HCT116 (cell line): ENCODE measurements at regions of chr2 and their contacts with region 1.

Region 1: GRCh38 chr2:191811807-191812602 is 34.9 kb downstream of the CAVIN2 start:
- DNase-seq: peak; percentile 53
- ATAC-seq: peak; percentile 94
- H3K4me3 ChIP-seq: no peak overlapping the region
- H3K27ac ChIP-seq: no peak overlapping the region
- H3K4me1 ChIP-seq: no peaks in the 10 kb centered on the region
- H3K27me3 ChIP-seq: no peaks in the 10 kb centered on the region
- CTCF ChIP-seq: peak; percentile 73 to 89 (median 87)
- POLR2A ChIP-seq: no peak
- RAD21 ChIP-seq: peak; percentile 97

Region 2: DNA sequence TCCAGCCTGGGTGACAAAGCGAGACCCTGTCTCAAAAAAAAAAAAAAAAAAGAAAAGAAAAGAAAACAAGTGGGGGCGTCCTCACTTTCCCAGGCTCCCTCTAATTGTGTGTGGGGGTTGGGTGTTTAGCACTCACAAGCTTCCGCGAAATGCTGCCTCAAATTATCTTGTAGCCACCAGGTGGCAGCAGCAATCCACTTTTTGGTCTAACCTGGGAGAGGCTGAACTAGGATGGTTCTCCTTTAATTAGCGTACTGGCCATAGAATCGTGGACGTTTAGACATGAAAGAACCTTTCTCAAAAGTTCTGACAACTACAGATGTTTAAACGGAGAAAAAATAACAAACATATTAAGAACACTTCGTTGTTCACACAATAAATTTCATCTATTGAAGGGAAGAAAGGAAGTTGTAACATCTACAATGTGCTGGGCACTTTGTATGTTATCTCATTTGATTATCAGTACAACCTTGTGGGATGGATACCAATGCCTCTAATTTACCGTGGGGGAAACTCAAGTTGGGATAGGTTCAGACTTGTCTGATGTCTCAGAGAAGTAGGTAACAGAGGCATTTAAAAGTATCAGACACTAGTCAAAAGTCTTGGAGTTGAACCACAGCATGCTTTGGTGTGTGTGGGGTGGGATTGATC is 256.8 kb before region 1 on chr2:
- CTCF ChIA-PET with region 1: interaction called, 8 read pairs
- POLR2A ChIA-PET with region 1: no interaction called
- RAD21 ChIA-PET with region 1: no interaction called
- intact Hi-C with region 1: loop called (anchors 5 kb)
- DNase-seq: peak; percentile 73
- ATAC-seq: peak; percentile 98
- H3K4me3 ChIP-seq: no peak overlapping the region
- H3K27ac ChIP-seq: no peak overlapping the region
- H3K4me1 ChIP-seq: peaks cover 0 to 5% of the 10 kb centered on the region in 2 experiments; a peak in 2 of 4 replicates
- H3K27me3 ChIP-seq: no peaks in the 10 kb centered on the region
- CTCF ChIP-seq: peak; percentile 56 to 80 (median 66); a peak in 5 of 6 replicates
- POLR2A ChIP-seq: no peak
- RAD21 ChIP-seq: peak; percentile 92

Region 3: DNA sequence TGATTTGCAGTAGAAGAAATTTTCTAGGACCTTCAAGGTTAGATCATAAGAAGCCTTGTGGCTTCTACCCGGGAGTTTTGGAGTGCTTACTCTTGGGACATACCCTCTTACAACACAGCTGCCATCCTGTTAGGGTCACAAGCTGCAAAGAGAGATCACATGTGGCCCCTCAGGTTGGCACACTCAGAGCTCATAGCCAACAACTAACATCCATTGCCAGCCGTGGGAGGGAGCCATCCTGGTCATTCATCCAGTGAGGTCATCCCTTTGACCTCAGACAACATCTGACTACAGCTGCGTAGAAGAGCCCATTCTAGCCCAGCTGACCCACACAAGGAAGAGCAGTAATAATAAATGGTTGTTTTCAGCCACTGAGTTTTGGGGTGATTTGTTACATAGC is 210.9 kb before region 1 on chr2:
- CTCF ChIA-PET with region 1: no interaction called
- POLR2A ChIA-PET with region 1: no interaction called
- RAD21 ChIA-PET with region 1: no interaction called
- intact Hi-C with region 1: no loop called
- DNase-seq: no peak
- ATAC-seq: no peak
- H3K4me3 ChIP-seq: no peak overlapping the region
- H3K27ac ChIP-seq: no peak overlapping the region
- H3K4me1 ChIP-seq: no peaks in the 10 kb centered on the region
- H3K27me3 ChIP-seq: no peaks in the 10 kb centered on the region
- CTCF ChIP-seq: no peak
- POLR2A ChIP-seq: no peak
- RAD21 ChIP-seq: no peak

Region 4: DNA sequence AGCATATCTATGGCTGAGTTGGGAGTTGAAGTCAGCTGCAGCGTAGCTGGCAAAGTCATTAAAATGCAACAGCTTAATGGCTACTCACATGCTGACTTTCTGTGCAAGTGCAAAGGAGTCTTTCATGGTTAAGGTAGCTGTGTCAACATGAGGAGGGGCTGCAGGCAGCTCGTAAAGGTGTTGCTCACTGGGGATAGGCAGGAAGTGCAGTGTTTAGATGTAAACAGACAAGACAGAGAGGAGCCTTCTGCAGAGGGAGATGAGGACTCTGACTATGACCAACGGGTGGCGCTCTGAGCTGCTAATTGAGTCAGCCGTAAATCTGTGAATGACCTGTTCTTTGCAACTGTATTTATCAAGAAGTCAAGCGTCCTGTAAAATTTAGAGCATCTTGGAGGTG is 57.2 kb after region 1 on chr2:
- CTCF ChIA-PET with region 1: interaction called, 39 read pairs
- POLR2A ChIA-PET with region 1: no interaction called
- RAD21 ChIA-PET with region 1: interaction called, 4 to 8 read pairs
- intact Hi-C with region 1: no loop called
- DNase-seq: peak; percentile 57
- ATAC-seq: peak; percentile 67
- H3K4me3 ChIP-seq: no peak overlapping the region
- H3K27ac ChIP-seq: no peak overlapping the region
- H3K4me1 ChIP-seq: peaks cover 36 to 45% of the 10 kb centered on the region in 2 experiments
- H3K27me3 ChIP-seq: no peaks in the 10 kb centered on the region
- CTCF ChIP-seq: peak; percentile 64 to 75 (median 66)
- POLR2A ChIP-seq: no peak
- RAD21 ChIP-seq: peak; percentile 79

Region 5: DNA sequence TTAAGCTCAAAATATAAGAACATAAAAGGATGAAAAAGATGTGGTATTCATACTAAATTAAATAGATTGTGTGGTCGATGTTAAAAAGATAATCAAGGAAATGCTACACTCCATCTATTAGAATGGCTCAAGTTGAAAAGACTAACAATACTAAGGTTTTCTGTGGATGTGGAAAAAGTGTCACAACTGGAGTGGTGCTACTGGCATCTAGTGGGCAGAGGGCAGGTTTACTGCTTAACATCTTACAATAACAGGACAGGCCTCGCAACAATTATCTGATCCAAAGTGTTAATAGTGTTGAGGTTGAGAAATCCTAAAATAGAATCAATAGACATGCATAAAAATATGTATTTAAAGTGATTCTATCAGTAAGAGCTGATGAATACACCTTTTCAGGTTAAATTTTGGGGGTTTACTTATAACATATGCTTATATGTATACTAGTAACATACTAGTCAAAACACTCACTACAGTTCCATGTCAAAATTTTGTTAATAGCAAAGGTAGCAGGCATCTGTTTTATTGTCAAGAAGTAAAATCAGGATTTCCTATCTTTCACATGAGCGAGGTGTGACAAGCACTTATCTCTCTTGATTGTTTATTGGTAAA is 474.2 kb after region 1 on chr2:
- CTCF ChIA-PET with region 1: interaction called, 9 read pairs
- POLR2A ChIA-PET with region 1: no interaction called
- RAD21 ChIA-PET with region 1: no interaction called
- intact Hi-C with region 1: loop called (anchors 1 kb)
- DNase-seq: peak; percentile 31
- ATAC-seq: peak; percentile 70
- H3K4me3 ChIP-seq: no peak overlapping the region
- H3K27ac ChIP-seq: no peak overlapping the region
- H3K4me1 ChIP-seq: no peaks in the 10 kb centered on the region
- H3K27me3 ChIP-seq: no peaks in the 10 kb centered on the region
- CTCF ChIP-seq: peak; percentile 26 to 64 (median 52); a peak in 5 of 6 replicates
- POLR2A ChIP-seq: no peak
- RAD21 ChIP-seq: peak; percentile 71

Region 6: GRCh38 chr2:193584522-193584938 is 1772.5 kb after region 1 on chr2:
- CTCF ChIA-PET with region 1: interaction called, 10 read pairs
- POLR2A ChIA-PET with region 1: no interaction called
- RAD21 ChIA-PET with region 1: no interaction called
- intact Hi-C with region 1: no loop called
- DNase-seq: peak; percentile 15
- ATAC-seq: peak; percentile 88
- H3K4me3 ChIP-seq: no peak overlapping the region
- H3K27ac ChIP-seq: no peak overlapping the region
- H3K4me1 ChIP-seq: no peaks in the 10 kb centered on the region
- H3K27me3 ChIP-seq: no peaks in the 10 kb centered on the region
- CTCF ChIP-seq: peak; percentile 20 to 57 (median 52); a peak in 4 of 6 replicates
- POLR2A ChIP-seq: no peak
- RAD21 ChIP-seq: peak; percentile 57